ENCODE measurements at regions of chr3 and their contacts with region 1.

Region 1: GRCh38 chr3:64321747-64322146 is 96.5 kb upstream of the PRICKLE2 start:
- DNase-seq: peak; percentile 82
- H3K4me3 ChIP-seq: no peak overlapping the region
- H3K27ac ChIP-seq: peak overlapping the region; percentile 43
- H3K4me1 ChIP-seq: peaks cover 35% of the 10 kb centered on the region
- H3K27me3 ChIP-seq: no peaks in the 10 kb centered on the region
- CTCF ChIP-seq: no peak

Region 2: DNA sequence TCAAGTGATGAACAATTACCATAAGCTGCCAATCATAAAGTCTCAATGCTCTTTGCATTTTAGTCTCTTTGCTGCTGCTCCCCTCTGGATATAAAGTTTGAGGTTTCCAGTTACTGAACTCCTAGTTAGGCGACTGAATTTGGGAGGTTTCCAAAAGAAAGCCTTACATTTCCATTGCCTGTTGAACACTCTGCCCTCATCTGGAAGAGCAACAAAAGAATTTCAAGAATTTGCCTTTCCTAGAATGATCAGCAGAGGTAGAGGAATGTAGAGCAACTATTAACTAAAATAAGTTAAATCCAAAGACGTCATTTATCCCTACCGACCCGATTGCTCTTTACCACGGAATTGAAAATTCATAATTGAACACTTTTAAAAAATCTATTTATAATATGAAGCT is 43.1 kb before region 1 on chr3:
- CTCF ChIA-PET with region 1: no interaction called
- dilution Hi-C with region 1: no loop called
- in situ Hi-C with region 1: no loop called
- intact Hi-C with region 1: no loop called
- DNase-seq: no peak
- H3K4me3 ChIP-seq: no peak overlapping the region
- H3K27ac ChIP-seq: no peak overlapping the region
- H3K4me1 ChIP-seq: peaks cover 14% of the 10 kb centered on the region
- H3K27me3 ChIP-seq: no peaks in the 10 kb centered on the region
- CTCF ChIP-seq: no peak

Region 3: GRCh38 chr3:64295594-64295993 is 26.2 kb before region 1 on chr3:
- CTCF ChIA-PET with region 1: no interaction called
- dilution Hi-C with region 1: no loop called
- in situ Hi-C with region 1: no loop called
- intact Hi-C with region 1: no loop called
- DNase-seq: peak; percentile 80
- H3K4me3 ChIP-seq: no peak overlapping the region
- H3K27ac ChIP-seq: peak overlapping the region; percentile 9
- H3K4me1 ChIP-seq: peaks cover 33% of the 10 kb centered on the region
- H3K27me3 ChIP-seq: no peaks in the 10 kb centered on the region
- CTCF ChIP-seq: no peak

Region 4: GRCh38 chr3:64392001-64392400 is 70.3 kb after region 1 on chr3:
- CTCF ChIA-PET with region 1: no interaction called
- dilution Hi-C with region 1: loop called (anchors 5 kb)
- in situ Hi-C with region 1: no loop called
- intact Hi-C with region 1: no loop called
- DNase-seq: no peak
- H3K4me3 ChIP-seq: no peak overlapping the region
- H3K27ac ChIP-seq: no peak overlapping the region
- H3K4me1 ChIP-seq: no peaks in the 10 kb centered on the region
- H3K27me3 ChIP-seq: no peaks in the 10 kb centered on the region
- CTCF ChIP-seq: no peak

Region 5: GRCh38 chr3:64462203-64462602 is 140.5 kb after region 1 on chr3:
- CTCF ChIA-PET with region 1: no interaction called
- dilution Hi-C with region 1: no loop called
- in situ Hi-C with region 1: no loop called
- intact Hi-C with region 1: loop called (anchors 10 kb)
- DNase-seq: no peak
- H3K4me3 ChIP-seq: no peak overlapping the region
- H3K27ac ChIP-seq: no peak overlapping the region
- H3K4me1 ChIP-seq: peaks cover 2% of the 10 kb centered on the region
- H3K27me3 ChIP-seq: no peaks in the 10 kb centered on the region
- CTCF ChIP-seq: no peak